ENCODE measurements at regions of chr14 and their contacts with region 1.

Region 1: DNA sequence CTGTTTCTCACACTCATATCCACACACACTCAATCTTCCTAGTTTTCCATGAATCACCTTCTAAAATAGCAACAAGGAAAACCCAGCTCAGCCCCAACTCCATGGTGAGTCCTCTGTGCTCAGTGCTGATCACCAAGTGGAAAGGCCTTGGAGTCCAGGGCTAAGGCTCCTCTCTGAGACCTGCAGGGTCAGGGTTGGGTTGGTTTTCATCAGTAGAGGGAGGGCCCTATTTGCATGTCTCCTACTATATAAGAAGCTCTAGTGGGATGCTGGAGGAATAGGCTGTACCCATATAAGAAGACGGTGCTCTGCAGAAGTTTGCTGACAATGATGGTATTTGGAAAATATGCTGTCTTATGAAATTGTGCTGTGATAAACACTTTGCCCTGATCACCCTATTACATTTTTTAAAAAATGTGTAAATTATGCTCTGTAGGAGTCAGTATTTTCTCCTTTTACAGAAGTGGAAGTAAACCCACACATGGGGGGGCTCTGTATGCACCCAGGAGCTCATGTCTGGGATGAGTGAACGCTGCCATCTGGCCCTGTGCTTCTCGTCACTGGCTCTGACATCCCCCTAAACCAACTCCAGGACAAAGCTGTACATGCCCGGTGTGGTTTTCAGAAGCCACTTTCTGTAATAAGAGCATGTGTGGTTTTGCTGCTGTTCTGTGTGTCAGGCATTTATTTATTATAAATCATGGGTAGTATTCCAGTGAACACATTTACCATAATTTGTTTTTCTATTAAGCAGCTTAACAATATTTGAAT is 536.3 kb downstream of the TMEM121 start:
- DNase-seq: peak; percentile 57 to 94 (median 92)
- H3K4me3 ChIP-seq: no peak overlapping the region
- H3K27ac ChIP-seq: no peak overlapping the region
- H3K4me1 ChIP-seq: peaks cover 0 to 26% (median 15%) of the 10 kb centered on the region in 4 experiments
- H3K27me3 ChIP-seq: peaks cover 0 to 17% (median 0%) of the 10 kb centered on the region in 5 experiments

Region 2: DNA sequence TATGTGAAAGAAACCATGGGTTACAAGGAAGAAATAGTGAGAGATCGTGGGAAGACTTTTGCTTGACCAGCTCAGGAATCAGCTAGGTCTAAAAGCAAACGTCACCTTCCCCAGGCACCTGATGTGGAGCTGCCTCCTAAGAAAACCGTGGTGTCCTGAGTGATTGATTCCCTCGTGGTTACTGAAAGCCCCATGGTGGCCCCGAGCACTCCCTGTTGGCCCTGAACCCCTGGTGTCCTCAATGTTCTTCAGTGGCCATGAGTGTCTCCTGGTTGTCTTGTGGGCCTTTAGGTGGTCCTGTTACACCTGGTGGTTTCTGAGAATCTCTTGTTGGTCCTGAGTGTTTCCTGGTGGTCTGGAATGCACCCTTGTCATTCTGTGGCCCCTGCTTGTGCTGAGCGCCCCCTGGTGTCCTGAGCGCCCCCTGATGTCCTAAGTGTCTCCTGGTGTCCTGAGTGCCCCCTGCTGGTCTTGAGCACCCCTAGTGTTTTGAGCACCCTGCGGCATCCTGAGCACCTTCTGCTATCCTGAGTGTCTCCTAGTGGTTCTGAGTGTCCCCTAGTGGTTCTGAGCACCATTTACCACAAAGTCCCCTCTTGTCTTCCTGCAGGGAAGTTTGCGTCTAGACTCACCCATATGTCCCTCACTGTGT is 17.6 kb before region 1 on chr14:
- CTCF ChIA-PET with region 1: interaction called, 21 read pairs
- POLR2A ChIA-PET with region 1: no interaction called
- DNase-seq: peak; percentile 91 to 94 (median 93)
- H3K4me3 ChIP-seq: no peak overlapping the region
- H3K27ac ChIP-seq: no peak overlapping the region
- H3K4me1 ChIP-seq: no peaks in the 10 kb centered on the region
- H3K27me3 ChIP-seq: peaks cover 0 to 3% (median 0%) of the 10 kb centered on the region in 5 experiments

Region 3: DNA sequence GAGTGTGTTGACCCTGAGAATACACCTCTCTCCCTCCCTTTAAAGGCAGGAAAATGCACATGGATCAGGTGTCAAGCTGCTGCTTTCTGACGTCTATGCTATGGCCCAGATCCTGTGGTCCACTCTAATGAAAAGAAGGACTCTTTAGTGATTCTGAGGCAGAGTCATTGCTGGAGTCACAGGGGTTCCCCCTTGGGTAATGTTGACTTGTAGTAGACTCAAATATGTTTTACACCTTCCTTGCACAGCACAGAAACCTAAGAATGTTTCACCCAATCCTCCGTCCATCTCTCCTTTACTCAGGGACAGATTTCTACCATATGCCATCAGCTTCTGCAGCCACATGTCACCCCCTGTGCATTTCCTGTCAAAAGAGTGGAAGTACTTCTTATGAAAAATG is 10.9 kb before region 1 on chr14:
- CTCF ChIA-PET with region 1: interaction called, 15 read pairs
- POLR2A ChIA-PET with region 1: no interaction called
- DNase-seq: no peak
- H3K4me3 ChIP-seq: no peak overlapping the region
- H3K27ac ChIP-seq: no peak overlapping the region
- H3K4me1 ChIP-seq: peaks cover 0 to 6% (median 2%) of the 10 kb centered on the region in 4 experiments
- H3K27me3 ChIP-seq: peaks cover 0 to 4% (median 0%) of the 10 kb centered on the region in 5 experiments

Measured in common myeloid progenitor, CD34-positive (primary cell).